ENCODE measurements at regions of chr6 and their contacts with region 1.

Region 1: DNA sequence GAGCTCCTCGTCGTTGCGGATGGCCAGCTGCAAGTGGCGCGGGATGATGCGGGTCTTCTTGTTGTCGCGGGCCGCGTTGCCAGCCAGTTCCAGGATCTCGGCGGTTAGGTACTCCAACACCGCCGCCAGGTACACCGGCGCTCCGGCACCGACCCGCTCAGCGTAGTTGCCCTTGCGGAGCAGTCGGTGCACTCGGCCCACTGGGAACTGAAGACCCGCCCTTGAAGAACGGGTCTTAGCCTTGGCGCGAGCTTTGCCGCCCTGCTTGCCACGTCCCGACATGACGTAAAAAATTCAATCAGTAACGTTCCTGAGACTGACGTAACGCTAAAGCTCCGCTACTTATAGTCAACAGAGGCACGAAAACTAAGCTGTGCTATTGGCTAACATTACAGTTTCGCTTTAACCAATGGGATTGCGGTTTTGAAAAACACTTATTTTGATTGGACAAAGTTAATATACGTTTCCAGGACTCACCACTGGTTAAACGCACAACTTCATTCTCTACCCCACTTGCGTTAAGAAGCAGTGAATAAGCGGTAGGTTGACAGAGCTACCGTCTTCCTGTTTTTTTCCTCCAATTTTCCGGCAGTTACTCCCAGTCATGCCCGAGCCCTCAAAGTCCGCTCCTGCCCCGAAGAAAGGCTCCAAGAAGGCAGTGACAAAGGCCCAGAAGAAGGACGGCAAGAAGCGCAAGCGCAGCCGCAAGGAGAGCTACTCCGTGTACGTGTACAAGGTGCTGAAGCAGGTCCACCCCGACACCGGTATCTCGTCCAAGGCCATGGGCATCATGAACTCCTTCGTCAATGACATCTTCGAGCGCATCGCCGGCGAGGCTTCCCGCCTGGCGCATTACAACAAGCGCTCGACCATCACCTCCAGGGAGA is 73.9 kb downstream of the OR2B2 start:
- DNase-seq: peak; percentile 83
- H3K4me3 Mint-ChIP-seq: no peak overlapping the region
- H3K27ac Mint-ChIP-seq: no peak overlapping the region
- H3K4me1 Mint-ChIP-seq: peaks cover 25% of the 10 kb centered on the region
- H3K27me3 Mint-ChIP-seq: no peaks in the 10 kb centered on the region

Region 2: DNA sequence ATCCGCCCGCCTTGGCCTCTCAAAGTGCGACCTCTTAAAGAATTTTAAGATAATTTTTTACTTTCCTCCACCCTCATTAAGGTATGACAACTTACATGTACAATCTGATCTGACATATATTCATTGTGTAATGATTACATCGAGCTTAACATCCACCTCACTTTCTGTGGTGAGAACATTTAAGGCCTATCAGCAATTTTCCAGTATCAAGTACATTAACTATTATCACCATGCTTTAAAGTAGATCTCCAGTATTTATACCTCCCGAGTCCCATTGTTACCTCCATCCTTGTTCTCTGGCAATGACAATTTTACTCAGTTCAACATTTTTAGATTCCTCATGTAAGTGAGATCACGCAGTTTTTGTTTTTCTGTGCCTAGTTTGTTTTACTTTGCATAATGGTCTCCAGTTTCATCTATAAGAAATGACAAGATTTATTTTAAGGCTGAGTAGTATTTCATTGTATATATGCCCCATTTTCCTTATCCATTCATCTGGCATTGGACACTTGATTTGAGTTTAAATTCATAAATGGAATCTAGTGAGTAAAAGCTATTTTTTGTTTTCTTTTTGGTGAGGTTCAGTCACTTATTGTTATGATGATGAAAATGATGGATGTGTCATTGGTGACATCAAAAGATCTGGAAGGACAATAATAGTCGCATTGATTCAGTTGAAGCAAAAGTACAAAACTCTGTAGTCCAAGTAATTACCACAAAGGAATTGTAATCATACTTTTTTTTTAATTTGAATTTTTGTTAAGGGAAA is 13.1 kb before region 1 on chr6:
- intact Hi-C with region 1: loop called (anchors 1 kb)
- DNase-seq: no peak
- H3K4me3 Mint-ChIP-seq: peak overlapping the region; percentile 89
- H3K27ac Mint-ChIP-seq: peak overlapping the region; percentile 96
- H3K4me1 Mint-ChIP-seq: peaks cover 46% of the 10 kb centered on the region
- H3K27me3 Mint-ChIP-seq: peaks cover 3% of the 10 kb centered on the region

Region 3: GRCh38 chr6:27864906-27865849 is 26.9 kb after region 1 on chr6:
- intact Hi-C with region 1: loop called (anchors 1 kb)
- DNase-seq: peak; percentile 80
- H3K4me3 Mint-ChIP-seq: peak overlapping the region; percentile 99
- H3K27ac Mint-ChIP-seq: peak overlapping the region; percentile 99
- H3K4me1 Mint-ChIP-seq: peaks cover 71% of the 10 kb centered on the region
- H3K27me3 Mint-ChIP-seq: peaks cover 4% of the 10 kb centered on the region

Region 4: DNA sequence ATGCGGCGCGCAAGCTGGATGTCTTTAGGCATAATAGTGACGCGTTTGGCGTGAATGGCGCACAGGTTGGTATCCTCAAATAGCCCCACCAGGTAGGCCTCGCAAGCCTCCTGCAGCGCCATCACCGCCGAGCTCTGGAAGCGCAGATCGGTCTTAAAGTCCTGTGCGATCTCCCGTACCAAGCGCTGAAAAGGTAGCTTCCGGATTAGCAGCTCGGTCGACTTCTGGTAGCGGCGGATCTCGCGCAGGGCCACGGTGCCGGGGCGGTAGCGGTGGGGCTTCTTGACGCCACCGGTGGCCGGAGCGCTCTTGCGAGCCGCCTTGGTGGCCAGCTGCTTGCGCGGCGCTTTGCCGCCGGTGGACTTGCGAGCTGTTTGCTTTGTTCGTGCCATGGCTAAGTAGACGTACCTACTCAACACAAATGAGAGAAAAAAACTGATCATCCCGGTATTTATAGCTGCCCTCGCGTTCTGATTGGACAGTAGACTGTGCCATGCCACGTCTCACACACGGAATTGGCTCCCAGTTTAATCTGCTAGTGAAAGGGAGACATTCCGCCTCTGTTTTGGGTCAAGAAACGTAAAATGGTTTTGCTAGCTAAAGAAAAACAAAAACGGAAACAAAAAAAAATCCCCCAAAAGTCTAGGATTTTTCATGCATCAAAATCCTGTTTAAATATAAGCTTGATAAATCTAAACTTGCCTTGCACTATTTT is 33.8 kb after region 1 on chr6:
- intact Hi-C with region 1: loop called (anchors 1 kb)
- DNase-seq: peak; percentile 87
- H3K4me3 Mint-ChIP-seq: peak overlapping the region; percentile 88
- H3K27ac Mint-ChIP-seq: peak overlapping the region; percentile 96
- H3K4me1 Mint-ChIP-seq: peaks cover 63% of the 10 kb centered on the region
- H3K27me3 Mint-ChIP-seq: no peaks in the 10 kb centered on the region

Region 5: GRCh38 chr6:28068067-28068466 is 229.8 kb after region 1 on chr6:
- intact Hi-C with region 1: no loop called
- DNase-seq: no peak
- H3K4me3 Mint-ChIP-seq: no peak overlapping the region
- H3K27ac Mint-ChIP-seq: no peak overlapping the region
- H3K4me1 Mint-ChIP-seq: no peaks in the 10 kb centered on the region
- H3K27me3 Mint-ChIP-seq: peaks cover 19% of the 10 kb centered on the region

Region 6: GRCh38 chr6:28335564-28336283 is 497.4 kb after region 1 on chr6 and contains the start of gene ZSCAN31:
- intact Hi-C with region 1: loop called (anchors 5 kb)
- DNase-seq: peak; percentile 56
- H3K4me3 Mint-ChIP-seq: no peak within 1 kb of the TSS
- H3K27ac Mint-ChIP-seq: no peak within 1 kb of the TSS
- H3K4me1 Mint-ChIP-seq: no peaks in the 10 kb centered on the region
- H3K27me3 Mint-ChIP-seq: peaks cover 7% of the 10 kb centered on the region
- total RNA-seq, gene ZSCAN31: 1.0 and 1.2 TPM in 2 replicates